GM12878 (cell line): ENCODE measurements at regions of chr12 and their contacts with region 1.

Region 1: GRCh38 chr12:31804185-31804504 is 75.3 kb upstream of the AMN1 start:
- DNase-seq: no peak
- ATAC-seq: peak; percentile 40
- H3K4me3 ChIP-seq: no peak overlapping the region
- H3K27ac ChIP-seq: peak overlapping the region; percentile 57
- H3K4me1 ChIP-seq: peaks cover 24% of the 10 kb centered on the region
- H3K27me3 ChIP-seq: no peaks in the 10 kb centered on the region
- CTCF ChIP-seq: no peak
- EP300 ChIP-seq: peak in 1 of 2 experiments; percentile 50; a peak in 1 of 4 replicates
- POLR2A ChIP-seq: no peak
- RAD21 ChIP-seq: 0 out of 2 replicates have a peak, but pooled peaks have one; percentile 1

Region 2: DNA sequence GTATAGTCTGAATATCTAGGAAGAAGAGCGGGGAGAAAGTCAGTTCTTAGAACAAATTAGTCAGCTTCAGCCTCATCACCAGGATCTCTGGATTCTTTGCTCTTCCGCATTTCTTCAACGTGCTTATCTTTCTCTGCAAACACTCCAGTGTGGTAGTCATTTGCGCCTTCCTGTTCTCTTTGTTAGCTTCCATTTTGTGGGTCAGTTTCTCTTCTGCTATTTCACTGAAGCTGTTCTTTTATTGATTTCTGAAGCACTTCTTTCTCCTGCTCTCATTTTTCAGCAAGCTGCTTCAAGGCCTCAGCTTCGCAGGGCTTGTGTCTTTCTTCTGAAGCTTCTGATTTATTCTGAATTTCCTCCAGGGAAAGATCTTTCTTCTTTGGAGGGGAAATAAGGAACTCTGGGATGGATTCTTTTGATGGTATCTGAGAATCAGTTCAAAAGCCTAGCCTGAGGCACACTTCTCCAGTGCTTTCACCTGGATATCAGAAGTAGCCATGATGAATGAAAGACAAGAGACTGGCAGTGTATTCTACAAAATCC is 88.8 kb before region 1 on chr12:
- CTCF ChIA-PET with region 1: no interaction called
- POLR2A ChIA-PET with region 1: interaction called, 3 read pairs
- RAD21 ChIA-PET with region 1: interaction called, 6 read pairs
- SMC1A ChIA-PET with region 1: interaction called, 11 read pairs
- in situ Hi-C with region 1: no loop called
- intact Hi-C with region 1: no loop called
- DNase-seq: peak; percentile 77
- ATAC-seq: peak; percentile 95
- H3K4me3 ChIP-seq: peak overlapping the region; percentile 54; the same call in 1 of the 2 replicates
- H3K27ac ChIP-seq: peak overlapping the region; percentile 90
- H3K4me1 ChIP-seq: peaks cover 10% of the 10 kb centered on the region
- H3K27me3 ChIP-seq: no peaks in the 10 kb centered on the region
- CTCF ChIP-seq: no peak
- EP300 ChIP-seq: peak in 1 of 2 experiments; percentile 35; a peak in 1 of 4 replicates
- POLR2A ChIP-seq: no peak
- RAD21 ChIP-seq: peak; percentile 13

Region 3: DNA sequence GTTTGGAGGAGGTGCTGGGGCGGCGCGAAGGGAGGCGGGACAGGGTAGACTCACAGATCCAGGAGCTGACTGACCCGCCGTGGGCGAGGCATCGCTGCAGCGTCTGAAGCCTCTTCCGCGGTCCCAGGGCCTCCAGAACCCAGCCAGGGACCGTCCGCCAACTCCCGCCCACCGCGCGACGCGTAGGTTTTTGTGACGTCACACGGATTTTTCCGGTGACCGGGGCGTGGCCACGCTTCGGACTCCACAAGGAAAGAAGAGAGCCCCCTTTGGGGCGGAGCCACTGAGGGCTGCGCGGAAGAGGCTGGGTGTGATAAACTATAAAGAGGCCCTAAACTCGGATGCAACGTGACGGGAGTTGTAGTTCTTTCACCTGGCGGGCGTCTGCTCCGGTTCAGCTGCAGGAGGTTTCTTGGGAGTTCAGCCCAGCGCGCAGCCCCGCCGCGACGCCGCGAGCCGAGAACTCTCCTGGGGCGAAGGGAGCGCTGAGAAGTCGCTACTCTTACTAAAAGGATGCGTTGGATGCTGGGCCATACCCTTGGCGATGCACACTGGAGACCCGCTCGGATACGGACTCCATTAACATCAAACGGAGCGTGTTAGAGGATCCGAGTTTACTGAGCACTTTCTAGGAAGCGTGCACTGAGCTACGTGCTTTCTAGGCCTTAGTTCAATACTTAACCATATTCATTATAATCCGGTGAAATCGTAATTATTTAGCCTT is 75.1 kb before region 1 on chr12 and contains the start of gene AMN1:
- CTCF ChIA-PET with region 1: no interaction called
- POLR2A ChIA-PET with region 1: interaction called, 7 read pairs
- RAD21 ChIA-PET with region 1: interaction called, 18 read pairs
- SMC1A ChIA-PET with region 1: interaction called, 83 read pairs
- in situ Hi-C with region 1: no loop called
- intact Hi-C with region 1: loop called (anchors 5 kb)
- DNase-seq: peak; percentile 99
- ATAC-seq: peak; percentile 96
- H3K4me3 ChIP-seq: peak within 1 kb of the TSS; percentile 79
- H3K27ac ChIP-seq: peak within 1 kb of the TSS; percentile 97
- H3K4me1 ChIP-seq: peaks cover 17% of the 10 kb centered on the region
- H3K27me3 ChIP-seq: no peaks in the 10 kb centered on the region
- CTCF ChIP-seq: no peak
- EP300 ChIP-seq: peak in 1 of 2 experiments; percentile 46; a peak in 1 of 4 replicates
- POLR2A ChIP-seq: peak; percentile 92
- RAD21 ChIP-seq: no peak
- polyA plus RNA-seq, gene AMN1: 15.2 to 19.3 TPM

Region 4: GRCh38 chr12:31742891-31743290 is 61.3 kb before region 1 on chr12:
- CTCF ChIA-PET with region 1: interaction called, 9 read pairs
- POLR2A ChIA-PET with region 1: interaction called, 66 read pairs
- RAD21 ChIA-PET with region 1: interaction called, 112 read pairs
- SMC1A ChIA-PET with region 1: interaction called, 16 read pairs
- in situ Hi-C with region 1: no loop called
- intact Hi-C with region 1: no loop called
- DNase-seq: no peak
- ATAC-seq: no peak; the same call in 2 of the 3 replicates
- H3K4me3 ChIP-seq: no peak overlapping the region
- H3K27ac ChIP-seq: no peak overlapping the region
- H3K4me1 ChIP-seq: peaks cover 27% of the 10 kb centered on the region
- H3K27me3 ChIP-seq: no peaks in the 10 kb centered on the region
- CTCF ChIP-seq: no peak
- EP300 ChIP-seq: no peak
- POLR2A ChIP-seq: no peak
- RAD21 ChIP-seq: no peak

Region 5: DNA sequence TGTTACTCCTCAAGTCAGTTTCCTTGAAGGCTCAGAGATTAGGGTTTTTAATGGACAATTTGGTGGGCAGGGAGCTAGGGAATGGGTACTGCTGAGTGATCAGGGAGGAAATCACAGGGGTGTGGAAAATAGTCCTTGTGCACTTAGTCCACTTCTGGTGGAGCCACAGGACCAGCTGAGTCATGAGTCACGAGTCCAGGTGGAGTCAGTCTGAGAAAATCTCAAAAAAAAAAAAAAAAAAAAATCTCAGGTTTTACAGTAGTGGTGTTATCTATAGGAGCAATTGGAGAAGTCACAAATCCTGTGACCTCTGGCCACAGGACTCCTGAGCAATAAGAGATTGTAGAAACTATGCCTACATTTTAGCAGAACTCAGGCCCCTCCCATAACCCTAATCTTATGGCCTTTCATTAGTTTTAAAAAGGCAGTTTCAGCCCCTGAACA is 47.1 kb before region 1 on chr12:
- CTCF ChIA-PET with region 1: interaction called, 3 read pairs
- POLR2A ChIA-PET with region 1: interaction called, 66 read pairs
- RAD21 ChIA-PET with region 1: interaction called, 112 read pairs
- SMC1A ChIA-PET with region 1: interaction called, 5 read pairs
- in situ Hi-C with region 1: loop called (anchors 5 kb)
- intact Hi-C with region 1: no loop called
- DNase-seq: no peak
- ATAC-seq: peak; percentile 33
- H3K4me3 ChIP-seq: no peak overlapping the region
- H3K27ac ChIP-seq: no peak overlapping the region
- H3K4me1 ChIP-seq: peaks cover 9% of the 10 kb centered on the region
- H3K27me3 ChIP-seq: no peaks in the 10 kb centered on the region
- CTCF ChIP-seq: 0 out of 6 replicates have a peak, but pooled peaks of 1 of the 3 experiments have one; percentile 0
- EP300 ChIP-seq: no peak
- POLR2A ChIP-seq: no peak
- RAD21 ChIP-seq: no peak

Region 6: DNA sequence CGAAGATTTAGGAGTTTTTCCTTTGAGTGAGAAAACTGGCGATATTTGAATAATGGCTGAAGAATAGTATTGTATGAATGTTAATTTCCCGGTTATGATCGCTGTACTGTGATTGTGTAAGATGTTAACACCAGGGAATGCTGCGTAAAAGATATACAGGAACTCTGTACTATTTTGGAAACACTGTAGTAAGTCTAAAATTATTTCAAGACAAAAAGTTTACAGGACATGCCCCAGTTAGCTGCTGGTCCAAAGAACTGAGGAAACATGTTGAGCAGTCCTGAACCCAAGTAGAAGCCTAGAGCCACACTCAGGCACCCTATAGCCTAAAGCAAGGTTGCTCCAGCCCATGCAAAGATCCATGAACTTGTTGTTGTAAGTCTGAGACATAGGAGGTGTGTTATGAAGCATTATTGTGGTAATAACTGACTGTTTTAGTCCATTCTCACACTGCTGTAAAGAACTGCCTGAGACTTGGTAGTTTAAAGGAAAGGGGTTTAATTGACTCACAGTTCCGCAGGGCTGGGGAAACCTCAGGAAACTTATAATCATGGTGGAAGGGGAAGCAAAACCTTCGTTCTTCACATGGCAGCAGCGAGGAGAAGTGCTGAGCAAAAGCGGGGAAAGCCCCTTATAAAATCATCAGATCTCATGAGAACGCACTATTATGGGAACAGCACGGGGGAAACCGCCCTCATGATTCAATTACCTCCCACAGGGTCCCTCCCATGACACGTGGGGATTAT is 55.3 kb after region 1 on chr12:
- CTCF ChIA-PET with region 1: no interaction called
- POLR2A ChIA-PET with region 1: no interaction called
- RAD21 ChIA-PET with region 1: no interaction called
- SMC1A ChIA-PET with region 1: no interaction called
- in situ Hi-C with region 1: no loop called
- intact Hi-C with region 1: no loop called
- DNase-seq: peak; percentile 63
- ATAC-seq: peak; percentile 90
- H3K4me3 ChIP-seq: no peak overlapping the region; the same call in 1 of the 2 replicates
- H3K27ac ChIP-seq: peak overlapping the region; percentile 74
- H3K4me1 ChIP-seq: peaks cover 6% of the 10 kb centered on the region; the same call in 1 of the 2 replicates
- H3K27me3 ChIP-seq: no peaks in the 10 kb centered on the region
- CTCF ChIP-seq: no peak
- EP300 ChIP-seq: no peak
- POLR2A ChIP-seq: no peak
- RAD21 ChIP-seq: no peak

Region 7: GRCh38 chr12:31896514-31897039 is 92.4 kb after region 1 on chr12:
- CTCF ChIA-PET with region 1: interaction called, 4 read pairs
- POLR2A ChIA-PET with region 1: interaction called, 5 read pairs
- RAD21 ChIA-PET with region 1: interaction called, 19 read pairs
- SMC1A ChIA-PET with region 1: interaction called, 8 read pairs
- in situ Hi-C with region 1: no loop called
- intact Hi-C with region 1: no loop called
- DNase-seq: peak; percentile 99
- ATAC-seq: peak; percentile 99
- H3K4me3 ChIP-seq: no peak overlapping the region
- H3K27ac ChIP-seq: peak overlapping the region; percentile 98
- H3K4me1 ChIP-seq: peaks cover 21% of the 10 kb centered on the region
- H3K27me3 ChIP-seq: no peaks in the 10 kb centered on the region
- CTCF ChIP-seq: no peak
- EP300 ChIP-seq: peak; percentile 95
- POLR2A ChIP-seq: peak; percentile 62
- RAD21 ChIP-seq: 0 out of 2 replicates have a peak, but pooled peaks have one; percentile 14

Region 8: DNA sequence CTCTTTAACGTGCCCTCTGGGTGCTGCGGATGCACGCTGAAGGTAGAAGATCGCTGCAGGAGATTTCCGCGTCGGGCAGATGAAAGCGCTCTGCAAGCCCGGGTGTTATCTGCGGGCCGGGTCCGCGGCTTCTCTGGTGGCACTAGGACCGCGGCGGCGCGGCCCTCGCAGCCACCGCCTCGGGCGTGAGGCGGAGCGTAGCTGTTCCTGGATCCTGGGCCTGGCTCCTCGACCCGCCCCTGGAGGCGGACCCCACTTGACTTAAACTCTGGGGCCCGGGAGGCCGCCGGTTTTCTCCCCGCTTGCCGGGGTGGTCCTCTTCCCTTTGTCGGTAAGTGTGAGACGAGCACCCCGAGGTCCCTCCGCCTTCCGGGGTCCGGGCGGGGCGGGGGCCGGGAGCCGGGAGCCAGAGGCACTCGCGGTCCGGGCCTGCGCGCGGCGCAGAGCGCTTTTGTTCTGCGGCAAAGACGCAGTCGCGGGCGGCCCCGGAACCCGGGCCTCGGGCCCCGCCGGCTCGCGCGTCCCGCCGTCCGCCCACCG is 155.1 kb after region 1 on chr12 and contains the start of gene RESF1:
- CTCF ChIA-PET with region 1: no interaction called
- POLR2A ChIA-PET with region 1: interaction called, 5 read pairs
- RAD21 ChIA-PET with region 1: interaction called, 47 read pairs
- SMC1A ChIA-PET with region 1: interaction called, 4 read pairs
- in situ Hi-C with region 1: no loop called
- intact Hi-C with region 1: no loop called
- DNase-seq: peak; percentile 57
- ATAC-seq: peak; percentile 92
- H3K4me3 ChIP-seq: peak within 1 kb of the TSS; percentile 86
- H3K27ac ChIP-seq: peak within 1 kb of the TSS; percentile 76
- H3K4me1 ChIP-seq: peaks cover 12% of the 10 kb centered on the region; the same call in 1 of the 2 replicates
- H3K27me3 ChIP-seq: no peaks in the 10 kb centered on the region
- CTCF ChIP-seq: no peak
- EP300 ChIP-seq: no peak
- POLR2A ChIP-seq: peak; percentile 81
- RAD21 ChIP-seq: no peak
- polyA plus RNA-seq, gene RESF1: 18.9 to 23.6 TPM